Common myeloid progenitor, CD34-positive (primary cell): ENCODE measurements at regions of chr1 and their contacts with region 1.

Region 1: GRCh38 chr1:161292631-161293030 is 17.1 kb downstream of the MPZ start:
- DNase-seq: no peak
- H3K4me3 ChIP-seq: no peak overlapping the region
- H3K27ac ChIP-seq: no peak overlapping the region
- H3K4me1 ChIP-seq: peaks cover 0 to 7% (median under 1%) of the 10 kb centered on the region in 4 experiments
- H3K27me3 ChIP-seq: no peaks in the 10 kb centered on the region

Region 2: GRCh38 chr1:161201828-161202725 is 90.6 kb before region 1 on chr1 and contains the start of gene NDUFS2:
- CTCF ChIA-PET with region 1: interaction called, 11 read pairs
- POLR2A ChIA-PET with region 1: no interaction called
- DNase-seq: peak; percentile 98 to 99 (median 98)
- H3K4me3 ChIP-seq: peak within 1 kb of the TSS; percentile 66 to 98 (median 89)
- H3K27ac ChIP-seq: peak within 1 kb of the TSS; percentile 77 to 89
- H3K4me1 ChIP-seq: peaks cover 0 to 54% (median 38%) of the 10 kb centered on the region in 4 experiments
- H3K27me3 ChIP-seq: no peaks in the 10 kb centered on the region

Region 3: GRCh38 chr1:161274874-161275273 is 17.8 kb before region 1 on chr1:
- CTCF ChIA-PET with region 1: interaction called, 10 read pairs
- POLR2A ChIA-PET with region 1: no interaction called
- DNase-seq: no peak
- H3K4me3 ChIP-seq: no peak overlapping the region
- H3K27ac ChIP-seq: no peak overlapping the region
- H3K4me1 ChIP-seq: no peaks in the 10 kb centered on the region
- H3K27me3 ChIP-seq: no peaks in the 10 kb centered on the region

Region 4: DNA sequence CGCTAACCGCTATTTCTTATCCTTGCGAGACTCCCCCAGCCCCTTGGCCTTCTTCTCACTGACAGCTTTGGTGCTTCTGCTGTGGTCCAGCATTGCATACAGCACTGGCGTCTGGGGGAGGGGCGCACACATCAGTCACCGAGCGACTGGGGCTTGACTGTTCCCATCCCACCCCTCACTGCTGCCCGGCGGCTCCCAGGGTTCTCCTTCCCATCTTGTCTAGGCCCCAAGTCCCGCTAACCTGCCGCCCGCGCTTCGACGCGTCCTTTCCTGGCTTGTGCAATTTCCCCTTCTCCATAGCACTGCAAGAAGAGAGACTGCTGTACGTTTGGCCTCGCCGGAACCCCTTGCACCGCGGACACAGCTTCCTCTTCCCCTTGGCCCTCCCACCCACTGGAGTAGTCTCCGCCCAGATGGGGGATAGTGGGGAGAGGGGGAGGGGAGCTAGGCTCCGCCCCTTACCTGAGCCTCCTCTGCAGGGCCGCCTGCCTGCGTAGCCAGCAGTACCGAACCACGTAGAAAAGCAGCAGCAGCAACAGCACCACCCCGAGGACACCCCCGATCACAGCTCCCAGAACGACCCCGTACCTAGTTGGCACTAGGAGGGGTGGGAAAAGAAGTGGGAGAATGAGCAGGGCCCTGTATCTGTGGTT is 13.4 kb after region 1 on chr1:
- CTCF ChIA-PET with region 1: interaction called, 21 read pairs
- POLR2A ChIA-PET with region 1: no interaction called
- DNase-seq: peak; percentile 95 to 96 (median 96)
- H3K4me3 ChIP-seq: peak overlapping the region; percentile 25 to 92 (median 75)
- H3K27ac ChIP-seq: peak overlapping the region; percentile 61 to 86
- H3K4me1 ChIP-seq: peaks cover 9 to 44% (median 30%) of the 10 kb centered on the region in 4 experiments
- H3K27me3 ChIP-seq: no peaks in the 10 kb centered on the region